ENCODE measurements at regions of chr22 and their contacts with region 1.

Region 1: GRCh38 chr22:46122511-46122971 is 27.8 kb upstream of the PPARA start:
- DNase-seq: no peak
- H3K4me3 ChIP-seq: no peak overlapping the region
- CTCF ChIP-seq: peak in 1 of 3 donors; percentile 72
- POLR2A ChIP-seq: no peak

Region 2: GRCh38 chr22:46006379-46007002 is 116.0 kb before region 1 on chr22:
- intact Hi-C with region 1: loop called (anchors 1 kb)
- DNase-seq: peak; percentile 90 to 99
- H3K4me3 ChIP-seq: no peak overlapping the region
- CTCF ChIP-seq: peak in 2 of 3 donors; percentile 43 to 96
- POLR2A ChIP-seq: no peak

Region 3: DNA sequence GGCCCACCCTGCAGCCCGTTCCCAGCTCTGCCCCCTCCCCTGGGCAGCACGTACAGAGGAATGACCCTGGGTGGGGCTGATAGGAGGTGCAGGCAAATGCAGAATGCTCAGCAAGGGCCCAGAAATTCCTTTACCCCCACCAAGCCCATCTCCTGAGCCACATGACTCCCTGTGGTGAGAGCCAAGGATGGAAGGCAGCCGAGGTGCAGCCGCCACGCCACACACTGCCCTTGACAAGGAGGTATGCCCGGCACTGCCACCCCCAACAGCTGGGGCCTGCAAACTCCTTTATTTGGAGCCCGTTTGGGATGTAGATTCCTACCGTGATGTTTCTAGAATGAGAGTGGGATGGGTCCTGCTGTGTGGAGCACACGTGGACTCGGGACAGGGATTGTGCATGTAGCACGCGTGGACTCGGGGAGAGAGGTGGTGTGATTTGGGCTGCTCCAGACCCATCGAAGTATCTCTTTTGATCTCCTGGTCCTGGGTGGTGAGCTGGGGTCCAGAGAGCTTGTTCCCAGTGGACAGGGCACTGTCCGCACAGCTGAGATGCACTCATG is 187.1 kb after region 1 on chr22:
- intact Hi-C with region 1: loop called (anchors 5 kb)
- DNase-seq: no peak
- H3K4me3 ChIP-seq: no peak overlapping the region
- CTCF ChIP-seq: no peak
- POLR2A ChIP-seq: no peak